Activated T-helper 2 cell treated with anti-CD3 and anti-CD28 coated beads, Interferon-gamma antibody, Interleukin-2, Interleukin-4, amounts not matched to agents 10 μg/mL and 5 μg/mL and 100 μg/mL, durations not matched to agents 14 hours and 24 hours and 36 hours (primary cell): ENCODE measurements at regions of chr4 and their contacts with region 1.

Region 1: GRCh38 chr4:184250795-184251669 is 33.4 kb upstream of the ENPP6 start:
- DNase-seq: no peak
- H3K4me3 Mint-ChIP-seq: no peak overlapping the region
- H3K27ac Mint-ChIP-seq: peak overlapping the region; percentile 67
- H3K4me1 Mint-ChIP-seq: peaks cover 17% of the 10 kb centered on the region
- H3K27me3 Mint-ChIP-seq: peaks cover 3% of the 10 kb centered on the region

Region 2: GRCh38 chr4:183840311-183840710 is 410.7 kb before region 1 on chr4:
- intact Hi-C with region 1: loop called (anchors 1 kb)
- DNase-seq: peak; percentile 34
- H3K4me3 Mint-ChIP-seq: no peak overlapping the region
- H3K27ac Mint-ChIP-seq: no peak overlapping the region
- H3K4me1 Mint-ChIP-seq: no peaks in the 10 kb centered on the region
- H3K27me3 Mint-ChIP-seq: peaks cover 12% of the 10 kb centered on the region

Region 3: DNA sequence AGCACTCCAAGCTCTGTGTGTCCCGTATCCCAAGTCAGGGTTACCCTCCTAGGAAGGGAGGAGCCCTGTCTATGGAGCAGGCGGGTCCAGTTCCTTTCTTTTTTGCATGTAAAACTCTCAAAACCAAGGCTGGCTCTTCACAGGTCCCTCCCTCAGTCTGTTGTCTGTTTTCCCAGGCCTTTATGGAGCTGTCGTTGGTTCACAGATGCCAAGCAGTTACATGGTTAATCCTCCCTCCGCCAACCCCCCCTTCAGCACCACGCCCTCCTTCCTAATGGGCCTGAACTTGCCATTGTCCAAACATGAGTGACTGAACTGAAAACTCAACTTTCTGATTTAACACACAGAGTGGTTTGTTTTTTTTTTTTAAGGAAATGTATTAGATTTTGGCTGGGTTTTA is 197.6 kb before region 1 on chr4:
- intact Hi-C with region 1: no loop called
- DNase-seq: no peak
- H3K4me3 Mint-ChIP-seq: no peak overlapping the region
- H3K27ac Mint-ChIP-seq: no peak overlapping the region
- H3K4me1 Mint-ChIP-seq: no peaks in the 10 kb centered on the region
- H3K27me3 Mint-ChIP-seq: no peaks in the 10 kb centered on the region

Region 4: DNA sequence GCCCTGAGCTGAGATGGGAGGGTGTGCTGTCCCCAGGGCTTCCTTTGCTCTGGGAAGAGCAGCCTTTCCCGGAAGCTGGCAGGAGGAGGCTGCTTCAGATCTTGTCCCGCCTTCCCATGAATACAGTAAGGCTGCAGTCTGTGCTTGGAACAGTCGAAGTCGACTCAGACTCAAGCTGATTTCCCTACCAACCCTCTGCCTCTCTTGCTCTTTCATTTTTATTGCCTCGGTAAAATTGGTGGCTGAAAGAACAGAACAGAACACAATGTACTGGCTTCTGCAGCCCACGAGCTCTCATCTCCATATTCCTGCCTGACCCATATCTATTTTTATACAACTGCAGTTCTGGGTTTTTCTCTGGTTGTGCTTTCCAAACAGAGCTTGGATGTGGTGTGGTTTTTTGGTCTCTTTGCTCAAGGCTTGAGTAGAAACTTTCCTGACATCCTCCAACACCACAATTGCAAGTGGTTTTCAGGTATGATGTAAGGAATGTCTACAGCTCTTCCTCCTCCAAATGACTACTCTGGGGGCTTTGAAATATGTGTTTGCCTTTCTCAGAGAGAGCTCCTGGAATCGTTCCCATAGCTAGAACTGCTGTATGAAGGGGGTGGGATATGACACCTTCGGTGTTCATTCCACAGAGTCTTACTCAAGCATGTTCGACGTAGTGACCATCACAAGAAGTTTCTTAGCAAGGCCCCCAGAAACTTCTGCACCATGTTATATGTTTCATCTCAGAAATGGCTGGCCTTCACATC is 94.7 kb before region 1 on chr4:
- intact Hi-C with region 1: no loop called
- DNase-seq: no peak
- H3K4me3 Mint-ChIP-seq: no peak overlapping the region
- H3K27ac Mint-ChIP-seq: no peak overlapping the region
- H3K4me1 Mint-ChIP-seq: no peaks in the 10 kb centered on the region
- H3K27me3 Mint-ChIP-seq: peaks cover 31% of the 10 kb centered on the region

Region 5: GRCh38 chr4:184168406-184169019 is 82.5 kb before region 1 on chr4:
- intact Hi-C with region 1: loop called (anchors 2 kb)
- DNase-seq: peak; percentile 44
- H3K4me3 Mint-ChIP-seq: no peak overlapping the region
- H3K27ac Mint-ChIP-seq: no peak overlapping the region
- H3K4me1 Mint-ChIP-seq: peaks cover 17% of the 10 kb centered on the region
- H3K27me3 Mint-ChIP-seq: peaks cover 43% of the 10 kb centered on the region

Region 6: GRCh38 chr4:184237612-184238011 is 13.4 kb before region 1 on chr4:
- intact Hi-C with region 1: loop called (anchors 2 kb)
- DNase-seq: peak; percentile 38
- H3K4me3 Mint-ChIP-seq: peak overlapping the region; percentile 9
- H3K27ac Mint-ChIP-seq: peak overlapping the region; percentile 85
- H3K4me1 Mint-ChIP-seq: peaks cover 37% of the 10 kb centered on the region
- H3K27me3 Mint-ChIP-seq: no peaks in the 10 kb centered on the region